Gastrocnemius medialis (tissue), 4 donors: ENCODE measurements at regions of chr1 and their contacts with region 1.

Region 1: DNA sequence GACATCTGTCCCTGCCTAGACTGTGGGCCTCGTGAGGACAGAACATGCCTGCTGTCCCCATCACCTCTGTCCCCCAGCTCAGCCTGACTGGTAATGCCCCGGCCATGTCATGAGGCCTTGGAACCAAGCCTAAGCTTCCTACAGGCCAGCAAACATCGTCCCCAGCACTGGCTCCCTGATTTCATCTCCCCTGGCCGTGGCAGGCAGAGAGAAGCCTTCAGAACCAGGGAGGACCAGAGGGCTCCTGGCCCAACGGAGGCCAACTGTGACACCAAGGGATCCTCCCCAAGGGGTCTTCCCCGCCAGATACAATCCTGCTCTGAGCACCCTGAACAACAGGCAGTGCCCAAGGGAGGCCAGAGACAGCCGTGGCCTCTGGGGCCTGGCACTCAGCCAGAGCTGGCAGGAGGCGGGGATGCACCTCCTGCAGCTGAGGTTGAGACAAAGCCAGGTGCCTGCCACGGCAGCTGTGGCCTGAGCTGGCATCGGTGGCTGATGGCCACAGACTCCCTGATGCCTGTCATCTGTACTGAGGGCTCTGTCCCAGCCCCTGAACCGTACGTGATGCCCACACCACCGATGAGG is 9.9 kb upstream of the NPHP4 start:
- DNase-seq: peak in 1 of 2 donors; percentile 77
- ATAC-seq: peak; percentile 68 to 69
- H3K4me3 ChIP-seq: no peak overlapping the region
- H3K27ac ChIP-seq: peak overlapping the region; percentile 68 to 83 (median 72)
- H3K4me1 ChIP-seq: no peaks in the 10 kb centered on the region
- H3K27me3 ChIP-seq: no peaks in the 10 kb centered on the region
- CTCF ChIP-seq: no peak
- POLR2A ChIP-seq: no peak

Region 2: DNA sequence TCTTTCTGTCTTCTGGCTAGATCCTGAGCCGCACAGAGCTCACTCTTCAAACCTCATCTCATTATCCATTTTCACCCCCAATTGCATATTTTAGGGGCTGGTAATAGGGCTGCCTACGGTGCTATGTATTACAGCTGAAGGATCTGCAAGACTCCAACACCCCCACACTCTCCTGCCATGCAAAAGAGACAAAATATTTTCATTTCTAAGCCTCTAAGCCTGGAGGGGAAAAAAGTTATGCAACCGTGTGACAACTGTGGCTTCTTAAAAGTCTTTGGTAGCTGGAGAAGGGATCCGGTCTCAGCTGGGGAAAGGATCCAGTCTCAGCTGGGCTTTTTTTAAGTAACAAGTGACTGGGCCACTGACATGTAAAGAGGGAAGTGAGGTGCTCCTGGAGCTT is 321.5 kb before region 1 on chr1:
- in situ Hi-C with region 1: no loop called
- intact Hi-C with region 1: no loop called
- DNase-seq: no peak
- ATAC-seq: no peak
- H3K4me3 ChIP-seq: no peak overlapping the region
- H3K27ac ChIP-seq: no peak overlapping the region
- H3K4me1 ChIP-seq: no peaks in the 10 kb centered on the region
- H3K27me3 ChIP-seq: peaks cover 0 to 6% (median 0%) of the 10 kb centered on the region in 3 donors
- CTCF ChIP-seq: no peak
- POLR2A ChIP-seq: no peak

Region 3: DNA sequence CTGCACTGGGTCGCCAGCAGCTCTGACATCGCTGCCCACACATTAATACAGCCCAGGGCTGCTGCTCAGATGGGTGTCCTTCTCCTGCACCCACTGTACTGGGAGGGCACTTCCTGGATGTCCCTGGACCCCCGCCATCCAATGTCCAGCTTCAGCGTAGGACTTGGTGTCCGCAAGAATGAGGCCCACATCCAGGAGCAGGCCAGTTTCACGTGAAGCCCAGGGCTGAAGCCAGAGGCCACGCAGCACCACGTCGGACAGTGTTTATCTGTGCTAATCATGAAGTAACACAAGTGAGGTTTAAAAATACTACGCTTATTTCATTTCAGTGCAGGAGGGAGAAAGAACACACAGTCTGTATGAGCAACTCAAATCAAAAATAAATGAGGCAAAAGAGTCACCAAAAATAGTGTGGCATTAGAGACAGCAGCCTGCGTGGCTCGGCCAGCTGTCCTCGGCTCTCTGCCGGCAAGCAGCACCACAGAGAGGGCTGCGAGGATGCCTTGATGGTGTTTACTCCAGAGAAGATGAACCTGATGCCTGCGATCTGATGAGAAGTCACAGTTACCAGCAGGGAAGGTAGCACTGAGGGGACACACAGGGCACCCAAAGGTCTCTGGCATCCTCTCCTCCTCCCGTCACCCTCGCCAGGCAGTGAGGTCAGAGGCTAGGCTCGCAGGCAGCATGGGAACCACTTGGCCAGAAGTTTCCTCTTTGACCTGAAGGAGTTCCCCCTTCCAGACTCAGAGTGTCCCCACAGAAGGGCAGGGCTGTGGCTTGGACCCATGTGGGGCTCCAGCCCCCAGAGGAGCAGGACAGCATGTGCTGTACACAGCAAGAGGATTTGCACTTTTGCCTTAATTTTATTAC is 12.3 kb after region 1 on chr1:
- in situ Hi-C with region 1: no loop called
- intact Hi-C with region 1: loop called (anchors 1 kb)
- DNase-seq: peak; percentile 79 to 94
- ATAC-seq: peak; percentile 89 to 93
- H3K4me3 ChIP-seq: no peak overlapping the region
- H3K27ac ChIP-seq: peak overlapping the region; percentile 78 to 88 (median 86)
- H3K4me1 ChIP-seq: peaks cover 10 to 21% of the 10 kb centered on the region in 2 donors
- H3K27me3 ChIP-seq: no peaks in the 10 kb centered on the region
- CTCF ChIP-seq: peak in 1 of 5 experiments; percentile 9
- POLR2A ChIP-seq: peak; percentile 46 to 57

Region 4: DNA sequence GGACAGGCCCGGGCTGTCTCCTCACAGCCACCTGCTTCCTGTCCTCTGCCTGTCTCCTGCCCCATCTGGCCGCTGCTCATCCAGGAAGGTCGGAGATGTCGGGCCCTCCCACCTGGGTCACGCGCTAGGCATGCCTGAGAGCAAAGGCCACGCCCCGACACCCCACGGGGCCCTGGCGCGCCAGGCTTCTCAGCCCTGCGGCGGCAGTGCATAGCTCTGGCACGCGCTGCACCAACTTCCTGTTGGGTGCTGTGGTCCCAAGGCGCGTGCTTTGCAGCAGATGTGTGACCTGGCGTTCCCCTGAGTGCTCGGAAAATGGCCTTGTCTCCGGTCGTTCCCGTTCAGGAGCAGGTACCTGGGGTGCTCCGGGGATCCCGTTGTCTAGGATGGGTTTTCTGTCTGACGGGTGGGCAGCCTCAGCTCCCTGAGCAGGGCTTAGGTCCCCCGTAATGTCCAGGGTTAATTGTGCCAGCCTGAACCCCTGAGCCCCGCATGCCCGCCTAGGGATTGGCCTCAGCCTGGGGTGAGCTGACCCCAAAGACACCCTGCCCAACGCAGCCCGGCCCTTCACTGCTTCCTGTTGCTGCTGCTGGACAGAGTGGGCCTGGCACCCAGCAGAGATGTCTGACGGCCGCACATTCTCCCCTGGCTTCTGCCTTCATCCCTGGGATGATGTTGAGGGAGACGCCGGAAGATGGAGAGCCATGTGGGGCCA is 24.2 kb after region 1 on chr1:
- in situ Hi-C with region 1: no loop called
- intact Hi-C with region 1: loop called (anchors 2 kb)
- DNase-seq: peak; percentile 64 to 83
- ATAC-seq: peak; percentile 46 to 51
- H3K4me3 ChIP-seq: peak overlapping the region in 2 of 4 donors; percentile 13 to 27
- H3K27ac ChIP-seq: peak overlapping the region; percentile 47 to 68 (median 60)
- H3K4me1 ChIP-seq: no peaks in the 10 kb centered on the region
- H3K27me3 ChIP-seq: no peaks in the 10 kb centered on the region
- CTCF ChIP-seq: no peak
- POLR2A ChIP-seq: peak; percentile 40 to 45

Region 5: GRCh38 chr1:6108937-6109614 is 107.0 kb after region 1 on chr1:
- in situ Hi-C with region 1: no loop called
- intact Hi-C with region 1: no loop called
- DNase-seq: no peak
- ATAC-seq: no peak
- H3K4me3 ChIP-seq: no peak overlapping the region
- H3K27ac ChIP-seq: no peak overlapping the region
- H3K4me1 ChIP-seq: no peaks in the 10 kb centered on the region
- H3K27me3 ChIP-seq: peaks cover 8 to 25% (median 8%) of the 10 kb centered on the region in 3 donors
- CTCF ChIP-seq: no peak
- POLR2A ChIP-seq: no peak

Region 6: GRCh38 chr1:6199298-6200187 is 197.5 kb after region 1 on chr1 and contains the start of gene RPL22:
- in situ Hi-C with region 1: no loop called
- intact Hi-C with region 1: no loop called
- DNase-seq: peak; percentile 97 to 98
- ATAC-seq: peak; percentile 98 to 100
- H3K4me3 ChIP-seq: peak within 1 kb of the TSS; percentile 78 to 96 (median 91)
- H3K27ac ChIP-seq: peak within 1 kb of the TSS; percentile 82 to 84 (median 83)
- H3K4me1 ChIP-seq: peaks cover 13 to 21% of the 10 kb centered on the region in 2 donors
- H3K27me3 ChIP-seq: no peaks in the 10 kb centered on the region
- CTCF ChIP-seq: peak in 1 of 5 experiments; percentile 12
- POLR2A ChIP-seq: peak; percentile 64 to 69
- total RNA-seq, gene RPL22: 95.2 to 132 (median 121) TPM